ENCODE measurements at regions of chr1 and their contacts with region 1.

Region 1: DNA sequence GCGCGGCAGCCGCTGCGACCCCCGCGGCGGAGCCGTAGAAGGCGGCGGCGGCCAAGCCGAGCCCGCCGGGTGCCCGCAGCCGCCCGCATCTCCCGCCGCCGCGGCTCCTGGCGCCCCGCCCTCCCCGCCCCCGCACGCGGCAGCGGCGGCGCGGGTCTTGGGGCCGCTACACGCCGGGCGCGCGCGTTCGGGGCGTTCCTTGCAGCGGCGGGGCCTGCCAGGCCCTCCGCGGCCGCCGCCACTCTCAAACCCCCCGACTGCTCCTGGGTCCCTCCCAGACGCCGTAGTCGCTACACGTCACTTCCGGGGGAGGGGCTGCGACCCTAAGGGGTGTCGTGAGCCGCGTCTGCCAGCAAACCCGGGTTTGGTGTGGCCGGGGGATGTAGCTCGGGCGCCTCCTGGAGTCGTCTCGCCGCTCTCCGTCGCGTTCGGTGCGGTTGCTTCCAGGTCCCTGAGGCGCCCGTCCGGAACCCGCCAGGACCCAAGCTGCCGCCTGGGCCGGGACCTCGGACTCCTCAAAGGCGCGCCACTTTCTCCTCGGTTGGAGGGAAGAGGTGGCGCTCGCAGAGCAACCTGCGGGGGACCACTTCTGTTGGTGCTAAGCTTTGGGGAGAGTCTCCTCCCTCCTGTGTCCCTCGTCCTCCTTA is at the start of gene ELK4:
- DNase-seq: peak; percentile 90 to 99
- H3K4me3 ChIP-seq: peak within 1 kb of the TSS; percentile 79 to 90
- H3K27ac ChIP-seq: peak within 1 kb of the TSS; percentile 97 to 98
- H3K4me1 ChIP-seq: peaks cover 0 to 21% of the 10 kb centered on the region in 2 donors
- H3K27me3 ChIP-seq: no peaks in the 10 kb centered on the region
- CTCF ChIP-seq: peak; percentile 72 to 91 (median 77)
- total RNA-seq, gene ELK4: 23.7 TPM

Region 2: DNA sequence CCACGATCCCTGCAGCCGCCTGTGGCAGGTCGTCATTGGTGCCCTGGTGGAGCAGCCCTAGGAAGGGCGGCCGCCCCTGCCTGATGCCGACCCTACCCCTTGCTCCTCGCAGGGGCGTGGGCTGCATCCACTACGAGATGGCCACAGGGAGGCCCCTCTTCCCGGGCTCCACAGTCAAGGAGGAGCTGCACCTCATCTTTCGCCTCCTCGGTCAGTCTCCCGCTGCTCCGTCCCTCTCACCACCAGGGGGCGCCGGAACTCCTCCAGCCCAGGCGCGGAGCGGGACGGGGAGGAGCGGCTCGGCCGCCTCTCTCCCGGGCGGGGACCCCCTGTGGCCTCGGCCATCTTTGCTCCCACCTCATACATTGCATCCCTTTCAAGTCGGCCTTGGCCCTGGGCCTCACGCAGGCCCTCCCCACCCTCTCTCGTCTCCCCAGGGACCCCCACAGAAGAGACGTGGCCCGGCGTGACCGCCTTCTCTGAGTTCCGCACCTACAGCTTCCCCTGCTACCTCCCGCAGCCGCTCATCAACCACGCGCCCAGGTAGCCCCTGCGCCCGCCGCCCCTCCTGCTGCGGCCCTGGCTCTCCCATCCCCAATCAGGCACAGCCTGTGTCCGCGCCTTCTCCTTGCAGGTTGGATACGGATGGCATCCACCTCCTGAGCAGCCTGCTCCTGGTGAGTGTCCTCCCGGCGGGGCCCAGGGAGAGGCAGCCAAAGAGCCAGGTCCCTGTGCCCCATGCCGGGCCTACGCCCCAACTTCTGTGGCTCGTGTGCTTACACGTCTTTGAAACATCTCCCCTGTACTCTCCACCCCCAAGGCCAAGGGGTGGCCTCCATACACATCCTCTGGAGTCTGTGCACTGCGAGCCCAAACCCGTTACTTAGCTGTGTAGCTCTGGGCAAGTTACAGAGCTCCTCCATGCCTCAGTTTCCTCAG is 102.7 kb before region 1 on chr1:
- intact Hi-C with region 1: loop called (anchors 1 kb)
- DNase-seq: peak in 1 of 2 donors; percentile 86
- H3K4me3 ChIP-seq: peak overlapping the region; percentile 14 to 60
- H3K27ac ChIP-seq: no peak overlapping the region
- H3K4me1 ChIP-seq: peaks cover 2 to 3% of the 10 kb centered on the region in 2 donors
- H3K27me3 ChIP-seq: no peaks in the 10 kb centered on the region
- CTCF ChIP-seq: peak; percentile 83 to 96 (median 94)

Region 3: GRCh38 chr1:205591522-205592351 is 40.1 kb before region 1 on chr1:
- intact Hi-C with region 1: loop called (anchors 1 kb)
- DNase-seq: peak; percentile 26 to 94
- H3K4me3 ChIP-seq: peak overlapping the region; percentile 40 to 62
- H3K27ac ChIP-seq: no peak overlapping the region
- H3K4me1 ChIP-seq: peaks cover 0 to 9% of the 10 kb centered on the region in 2 donors
- H3K27me3 ChIP-seq: no peaks in the 10 kb centered on the region
- CTCF ChIP-seq: peak; percentile 99 to 100 (median 99)

Region 4: DNA sequence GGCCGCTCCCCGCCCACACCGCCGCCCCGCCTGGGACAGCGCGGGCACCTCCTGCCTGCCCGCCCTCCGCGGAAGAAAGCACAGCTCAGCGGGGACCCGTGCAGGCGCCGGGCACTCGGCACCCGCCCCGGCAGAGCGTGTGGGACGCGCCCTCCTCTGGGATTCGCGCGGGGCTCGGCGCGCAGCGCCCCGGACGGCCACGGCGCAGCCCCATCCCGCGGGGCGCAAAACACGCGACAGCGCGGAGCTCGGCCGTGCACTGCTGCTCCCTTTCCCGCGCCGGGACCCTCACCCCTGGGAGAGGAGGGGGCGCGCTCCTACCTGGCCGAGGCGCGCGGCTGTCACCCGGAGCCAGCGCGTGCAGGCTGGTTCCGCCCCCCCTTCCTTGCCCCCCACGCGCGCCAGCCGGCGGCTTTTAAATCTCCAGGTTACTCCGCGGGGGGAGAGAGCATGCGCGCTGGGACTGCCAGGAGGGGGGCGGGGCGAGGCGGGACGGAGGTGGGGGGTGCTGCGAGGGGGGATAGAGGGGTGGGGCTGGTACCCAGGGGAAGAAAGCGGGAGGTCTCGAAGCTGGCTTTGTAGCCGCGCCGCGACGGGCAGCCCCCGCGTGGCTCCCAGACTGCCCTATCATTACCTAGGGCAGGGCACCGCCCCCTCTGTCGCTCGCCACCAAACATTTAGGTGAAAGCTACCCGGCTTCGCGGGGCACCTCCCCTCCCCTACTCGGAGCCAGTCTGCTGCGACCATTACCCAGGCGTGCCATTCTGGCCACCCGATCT is 48.4 kb after region 1 on chr1 and contains the start of gene SLC45A3:
- intact Hi-C with region 1: loop called (anchors 2 kb)
- DNase-seq: no peak
- H3K4me3 ChIP-seq: peak within 1 kb of the TSS; percentile 76 to 86
- H3K27ac ChIP-seq: peak within 1 kb of the TSS; percentile 78 to 88
- H3K4me1 ChIP-seq: peaks cover 0 to 21% of the 10 kb centered on the region in 2 donors
- H3K27me3 ChIP-seq: no peaks in the 10 kb centered on the region
- CTCF ChIP-seq: no peak
- total RNA-seq, gene SLC45A3: 3.4 TPM

Region 5: GRCh38 chr1:205919026-205919746 is 287.3 kb after region 1 on chr1:
- intact Hi-C with region 1: loop called (anchors 10 kb)
- DNase-seq: peak; percentile 33 to 91
- H3K4me3 ChIP-seq: no peak overlapping the region
- H3K27ac ChIP-seq: peak overlapping the region; percentile 72 to 73
- H3K4me1 ChIP-seq: peaks cover 22 to 60% of the 10 kb centered on the region in 2 donors
- H3K27me3 ChIP-seq: no peaks in the 10 kb centered on the region
- CTCF ChIP-seq: peak; percentile 84 to 95 (median 90)

Measured in ascending aorta (tissue), 2 donors.